Heart left ventricle (tissue), 16 donors: ENCODE measurements at regions of chrX and their contacts with region 1.

Region 1: DNA sequence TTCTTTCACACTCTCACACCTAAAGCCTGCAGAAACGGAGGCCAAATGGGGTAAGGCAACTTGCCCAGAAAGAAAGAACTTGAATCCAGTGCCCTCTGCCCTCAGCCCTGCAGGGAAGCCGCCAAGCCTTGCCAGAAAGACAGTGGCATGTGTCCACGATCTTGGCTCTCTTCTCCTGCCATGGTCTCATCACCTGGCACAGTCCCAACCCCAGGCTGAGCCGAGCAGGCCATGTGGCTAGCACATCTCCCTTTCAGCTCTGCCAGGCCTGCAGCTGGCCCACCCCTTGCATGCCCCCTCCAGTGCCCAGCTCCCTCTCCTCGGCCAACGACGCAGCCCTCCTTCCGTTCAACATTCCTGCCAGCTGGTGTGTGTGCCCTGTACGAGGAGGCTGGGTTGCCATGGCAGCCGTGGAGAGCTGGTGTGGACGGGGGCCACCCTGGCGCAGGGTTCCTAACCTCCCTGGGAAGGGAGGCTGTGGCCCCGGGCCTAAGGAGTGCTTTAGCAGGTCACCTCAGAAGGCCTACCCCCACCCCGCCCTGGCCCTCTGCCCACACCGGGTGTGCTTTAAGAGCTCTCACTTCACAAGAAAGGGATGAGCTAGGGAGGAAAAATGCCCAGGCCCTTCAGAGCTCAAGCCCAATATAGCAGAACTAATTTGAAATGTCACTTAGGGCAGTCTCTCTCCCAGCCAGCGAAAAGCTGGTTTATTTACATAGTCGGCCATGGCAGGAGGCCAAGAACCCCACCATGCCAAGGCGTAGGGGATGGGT is 73.0 kb upstream of the PJA1 start:
- DNase-seq: peak in 3 of 5 donors; percentile 23 to 66 (median 53)
- ATAC-seq: peak; percentile 68 to 84 (median 76)
- H3K4me3 ChIP-seq: no peak overlapping the region
- H3K27ac ChIP-seq: peak overlapping the region in 7 of 12 donors; percentile 34 to 60 (median 45)
- H3K4me1 ChIP-seq: peaks cover 0 to 5% (median 0%) of the 10 kb centered on the region in 12 donors
- H3K27me3 ChIP-seq: peaks cover 0 to 20% (median 0%) of the 10 kb centered on the region in 9 donors
- CTCF ChIP-seq: no peak
- POLR2A ChIP-seq: no peak

Region 2: GRCh38 chrX:69137371-69138117 is 100.8 kb before region 1 on chrX:
- intact Hi-C with region 1: no loop called
- DNase-seq: peak in 2 of 5 donors; percentile 37 to 38
- ATAC-seq: peak; percentile 21 to 75 (median 44)
- H3K4me3 ChIP-seq: peak overlapping the region in 9 of 12 donors; percentile 19 to 42 (median 37)
- H3K27ac ChIP-seq: peak overlapping the region; percentile 15 to 79 (median 59)
- H3K4me1 ChIP-seq: peaks cover 0 to 12% (median 0%) of the 10 kb centered on the region in 12 donors
- H3K27me3 ChIP-seq: peaks cover 0 to 30% (median 0%) of the 10 kb centered on the region in 9 donors
- CTCF ChIP-seq: no peak
- POLR2A ChIP-seq: no peak

Region 3: GRCh38 chrX:69280933-69281332 is 42.6 kb after region 1 on chrX:
- intact Hi-C with region 1: loop called in 6 of 10 experiments (anchors 5 to 10 kb)
- DNase-seq: peak in 3 of 5 donors; percentile 21 to 47 (median 27)
- ATAC-seq: peak; percentile 44 to 75 (median 56)
- H3K4me3 ChIP-seq: no peak overlapping the region
- H3K27ac ChIP-seq: peak overlapping the region in 4 of 12 donors; percentile 5 to 50 (median 36)
- H3K4me1 ChIP-seq: peaks cover 0 to 20% (median 2%) of the 10 kb centered on the region in 12 donors
- H3K27me3 ChIP-seq: peaks cover 0 to 28% (median 0%) of the 10 kb centered on the region in 9 donors
- CTCF ChIP-seq: no peak
- POLR2A ChIP-seq: no peak